Right cardiac atrium (tissue), 5 donors: ENCODE measurements at regions of chr1 and their contacts with region 1.

Region 1: DNA sequence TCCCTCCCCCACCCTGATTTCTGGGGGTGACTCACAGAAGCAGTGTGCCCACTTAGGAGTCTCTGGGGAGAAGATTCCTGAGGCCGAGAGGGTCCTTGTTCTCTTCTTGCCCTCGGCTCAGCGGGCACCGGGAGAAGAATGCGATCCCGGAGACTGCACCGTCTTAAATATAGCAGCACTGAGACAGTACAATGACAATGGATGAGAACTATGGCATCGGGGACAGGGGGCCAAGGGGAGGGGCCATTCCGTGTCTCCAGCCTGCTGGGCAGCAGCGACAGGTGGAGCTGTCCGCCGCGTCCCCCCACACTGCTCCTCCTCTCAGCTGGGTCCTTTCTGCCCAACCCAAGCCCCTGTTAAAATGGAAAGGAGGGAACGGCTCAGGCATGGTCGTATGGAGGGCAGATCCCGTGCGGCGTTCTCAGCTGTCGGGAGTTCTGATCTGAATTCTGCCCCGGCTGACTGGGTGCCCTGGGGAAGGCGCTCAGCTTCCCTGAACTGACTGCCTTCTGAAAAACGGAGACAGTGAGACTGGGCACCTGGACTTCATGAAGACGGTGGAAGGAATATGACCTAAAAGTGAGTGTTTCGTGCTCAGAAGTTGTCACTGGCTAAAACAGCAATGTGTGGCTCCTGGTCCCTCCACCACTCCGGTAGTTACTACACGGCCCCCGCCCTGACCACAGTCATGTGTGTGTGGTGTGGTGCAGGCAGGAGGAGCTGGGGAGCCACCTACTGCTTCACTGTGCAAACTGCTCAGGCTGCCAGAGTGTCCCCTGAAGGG is at the start of gene MYOM3:
- DNase-seq: peak; percentile 80 to 88 (median 87)
- ATAC-seq: peak; percentile 82 to 84
- H3K4me3 ChIP-seq: peak within 1 kb of the TSS; percentile 53
- H3K27ac ChIP-seq: peak within 1 kb of the TSS; percentile 98
- H3K4me1 ChIP-seq: peaks cover 2% of the 10 kb centered on the region
- H3K27me3 ChIP-seq: no peaks in the 10 kb centered on the region
- total RNA-seq, gene MYOM3: 202 to 292 (median 241) TPM

Region 2: DNA sequence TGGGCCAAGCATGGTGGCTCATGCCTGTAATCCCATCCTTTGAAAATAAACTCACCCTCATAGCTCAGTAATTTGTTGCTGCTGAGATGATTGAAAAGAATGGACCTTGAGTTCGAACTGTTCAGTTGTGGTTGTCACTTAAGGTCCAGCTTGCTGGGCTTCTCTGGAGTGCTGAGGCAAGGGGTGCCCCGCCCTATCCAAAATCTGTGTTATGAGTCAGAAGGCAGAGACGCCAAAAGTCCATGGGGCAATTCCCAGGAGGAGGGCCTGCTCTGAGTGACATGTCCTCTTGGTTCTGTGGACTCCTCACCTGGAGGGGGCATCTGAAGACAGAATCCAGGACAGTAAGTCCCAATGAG is 65.1 kb before region 1 on chr1:
- intact Hi-C with region 1: no loop called
- DNase-seq: peak in 2 of 3 donors; percentile 64 to 76
- ATAC-seq: peak; percentile 77 to 82
- H3K4me3 ChIP-seq: no peak overlapping the region
- H3K27ac ChIP-seq: no peak overlapping the region
- H3K4me1 ChIP-seq: peaks cover 6% of the 10 kb centered on the region
- H3K27me3 ChIP-seq: no peaks in the 10 kb centered on the region

Region 3: GRCh38 chr1:24070821-24071393 is 41.3 kb before region 1 on chr1:
- intact Hi-C with region 1: loop called (anchors 5 kb)
- DNase-seq: peak; percentile 75 to 87 (median 80)
- ATAC-seq: peak; percentile 79 to 89
- H3K4me3 ChIP-seq: no peak overlapping the region
- H3K27ac ChIP-seq: no peak overlapping the region
- H3K4me1 ChIP-seq: no peaks in the 10 kb centered on the region
- H3K27me3 ChIP-seq: no peaks in the 10 kb centered on the region

Region 4: GRCh38 chr1:24150234-24151174 is 38.3 kb after region 1 on chr1:
- intact Hi-C with region 1: no loop called
- DNase-seq: peak; percentile 88 to 96 (median 95)
- ATAC-seq: peak; percentile 92 to 93
- H3K4me3 ChIP-seq: no peak overlapping the region
- H3K27ac ChIP-seq: no peak overlapping the region
- H3K4me1 ChIP-seq: no peaks in the 10 kb centered on the region
- H3K27me3 ChIP-seq: no peaks in the 10 kb centered on the region

Region 5: DNA sequence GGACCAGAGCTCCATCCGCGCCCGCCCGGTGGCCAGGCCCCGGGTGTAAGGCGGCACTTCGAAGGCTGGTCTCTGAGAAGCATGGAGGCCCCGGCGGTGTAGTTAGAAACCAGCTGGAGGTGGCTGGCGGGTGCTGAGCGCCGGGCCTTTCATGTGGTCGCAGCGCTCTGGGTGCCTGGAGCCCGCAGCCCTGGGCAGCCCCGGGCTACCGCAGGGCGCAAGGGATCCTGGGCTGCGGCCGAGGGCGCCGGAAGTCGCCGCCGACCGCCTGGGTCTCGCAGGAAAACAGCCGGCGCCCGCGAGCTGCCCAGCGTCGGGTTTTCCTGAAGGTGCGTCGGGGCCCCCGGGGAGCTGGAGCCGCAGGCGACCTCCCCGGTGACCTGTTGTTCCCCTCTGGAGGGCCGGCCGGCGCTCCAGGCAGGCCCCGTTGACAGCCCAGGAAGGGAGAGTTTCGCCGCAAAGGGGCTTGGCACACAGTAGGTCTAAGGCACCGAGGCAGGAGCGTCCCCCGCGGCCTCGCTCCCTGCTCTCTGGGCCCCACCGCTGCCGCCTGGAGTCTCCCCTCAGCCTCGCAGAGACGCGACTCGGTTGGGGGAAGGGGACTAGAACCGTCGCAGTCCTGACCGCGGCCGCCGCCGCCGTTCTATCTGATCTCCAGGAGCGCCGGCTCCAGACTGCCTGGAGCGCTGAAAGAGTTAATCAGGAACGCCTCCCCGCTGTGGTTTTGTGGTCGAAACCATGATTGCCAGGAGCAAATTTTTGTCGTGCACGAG is 209.7 kb after region 1 on chr1:
- intact Hi-C with region 1: no loop called
- DNase-seq: peak; percentile 58 to 76 (median 75)
- ATAC-seq: peak; percentile 71 to 76
- H3K4me3 ChIP-seq: peak overlapping the region; percentile 47
- H3K27ac ChIP-seq: no peak overlapping the region
- H3K4me1 ChIP-seq: peaks cover 2% of the 10 kb centered on the region
- H3K27me3 ChIP-seq: no peaks in the 10 kb centered on the region

Region 6: DNA sequence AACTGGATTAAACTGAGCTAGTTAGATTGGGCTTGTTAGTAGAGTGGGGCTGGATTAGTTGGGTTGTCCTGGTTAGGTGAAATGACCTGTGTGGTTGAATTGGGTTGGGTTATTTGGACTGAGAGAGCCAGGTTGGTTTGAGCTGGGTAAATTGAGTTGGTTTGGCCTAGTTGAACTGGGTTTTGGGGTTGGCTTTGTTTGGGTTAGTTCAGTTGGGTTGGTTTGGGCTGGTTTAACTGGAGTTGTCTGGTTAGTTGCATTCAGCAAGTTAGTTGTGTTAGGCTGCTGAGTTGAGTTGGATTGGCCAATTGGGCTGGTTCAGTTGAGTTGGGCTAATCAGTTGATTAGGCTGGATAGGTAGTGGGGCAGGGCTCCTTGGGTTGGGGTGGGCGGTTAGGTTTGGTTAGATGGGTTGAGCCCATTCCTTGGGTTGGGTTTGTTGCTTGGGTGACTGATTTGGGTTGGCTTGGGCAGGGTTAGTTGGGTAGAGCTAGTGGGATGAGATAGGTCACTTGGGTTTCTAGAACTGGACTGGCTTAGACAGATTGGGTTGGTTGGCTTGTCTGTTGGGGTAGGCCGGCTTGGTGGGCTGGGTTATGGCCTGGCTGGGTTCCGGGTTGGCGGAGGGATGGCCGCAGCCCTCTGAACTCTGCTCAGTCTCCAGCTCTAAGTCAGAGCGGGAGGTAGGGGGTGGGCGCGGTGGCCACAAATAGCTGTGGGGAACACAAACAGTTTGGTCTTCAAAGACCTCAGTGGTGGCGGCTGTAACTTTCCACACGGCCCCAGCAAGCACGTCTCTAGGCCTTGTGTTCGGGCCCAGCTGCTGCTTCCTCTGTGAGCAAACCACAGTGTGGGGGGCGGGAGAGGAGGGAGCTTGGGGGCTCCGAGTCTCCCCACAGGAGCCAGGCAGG is 885.0 kb after region 1 on chr1:
- intact Hi-C with region 1: no loop called
- DNase-seq: no peak
- ATAC-seq: no peak
- H3K4me3 ChIP-seq: no peak overlapping the region
- H3K27ac ChIP-seq: no peak overlapping the region
- H3K4me1 ChIP-seq: no peaks in the 10 kb centered on the region
- H3K27me3 ChIP-seq: no peaks in the 10 kb centered on the region